Activated CD8-positive, alpha-beta T cell treated with anti-CD3 and anti-CD28 coated beads, Interleukin-2, amount 10 ng/mL, durations not matched to agents 7 days and 5 days (primary cell): ENCODE measurements at regions of chr1 and their contacts with region 1.

Region 1: GRCh38 chr1:206030714-206031113 is 7.0 kb upstream of the CTSE start:
- DNase-seq: peak; percentile 79
- ATAC-seq: peak; percentile 98
- H3K4me3 Mint-ChIP-seq: no peak overlapping the region
- H3K27ac Mint-ChIP-seq: no peak overlapping the region
- H3K4me1 Mint-ChIP-seq: peaks cover 7% of the 10 kb centered on the region
- H3K27me3 Mint-ChIP-seq: peaks cover 39% of the 10 kb centered on the region

Region 2: GRCh38 chr1:205983925-205984725 is 46.6 kb before region 1 on chr1:
- CTCF ChIA-PET with region 1: interaction called, 21 read pairs
- POLR2A ChIA-PET with region 1: no interaction called
- DNase-seq: peak; percentile 46
- ATAC-seq: peak; percentile 63
- H3K4me3 Mint-ChIP-seq: no peak overlapping the region
- H3K27ac Mint-ChIP-seq: no peak overlapping the region
- H3K4me1 Mint-ChIP-seq: no peaks in the 10 kb centered on the region
- H3K27me3 Mint-ChIP-seq: peaks cover 5% of the 10 kb centered on the region

Region 3: GRCh38 chr1:206041640-206042039 is 10.9 kb after region 1 on chr1:
- CTCF ChIA-PET with region 1: interaction called, 29 read pairs
- POLR2A ChIA-PET with region 1: no interaction called
- DNase-seq: no peak
- ATAC-seq: no peak
- H3K4me3 Mint-ChIP-seq: no peak overlapping the region
- H3K27ac Mint-ChIP-seq: no peak overlapping the region
- H3K4me1 Mint-ChIP-seq: peaks cover 7% of the 10 kb centered on the region
- H3K27me3 Mint-ChIP-seq: peaks cover 29% of the 10 kb centered on the region

Region 4: DNA sequence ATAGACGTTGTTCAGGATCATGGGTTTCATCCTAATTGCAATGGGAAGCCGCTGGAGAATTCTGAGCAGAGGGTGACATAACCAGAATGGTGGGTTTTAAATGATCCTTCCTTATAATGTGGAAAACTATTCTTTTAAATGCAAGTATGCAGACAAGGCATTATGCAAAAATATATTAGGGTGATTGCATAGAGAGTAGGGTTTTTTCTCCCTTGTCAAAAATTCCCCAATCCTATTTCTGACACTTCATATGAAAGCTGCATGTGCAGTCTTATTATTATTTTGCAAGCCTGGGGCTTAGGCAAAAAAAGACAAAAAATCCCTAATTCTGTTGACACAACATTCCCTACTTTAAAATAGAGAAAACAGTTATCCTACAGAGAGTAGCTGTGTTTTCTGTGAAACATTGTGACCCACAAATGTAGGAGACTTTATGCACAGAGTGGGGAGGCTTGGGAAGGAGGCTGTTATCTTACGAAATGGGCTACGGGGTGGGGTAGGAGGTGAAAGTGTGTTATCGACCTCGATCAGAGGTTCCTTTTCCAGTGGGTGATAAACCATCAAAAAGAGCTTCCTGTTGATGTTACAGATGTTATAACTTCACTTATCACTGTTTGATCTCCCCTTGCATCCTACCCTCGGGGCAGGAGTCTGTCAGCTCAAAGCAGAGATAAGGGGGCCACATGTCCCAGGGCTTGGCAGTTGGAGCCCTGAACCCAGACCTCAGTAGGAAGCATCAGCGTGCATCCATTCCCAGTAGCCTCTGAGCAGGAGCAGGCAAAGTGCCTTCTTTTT is 49.5 kb after region 1 on chr1:
- CTCF ChIA-PET with region 1: interaction called, 18 read pairs
- POLR2A ChIA-PET with region 1: no interaction called
- DNase-seq: no peak
- ATAC-seq: peak; percentile 63
- H3K4me3 Mint-ChIP-seq: peak overlapping the region; percentile 2
- H3K27ac Mint-ChIP-seq: no peak overlapping the region
- H3K4me1 Mint-ChIP-seq: peaks cover 18% of the 10 kb centered on the region
- H3K27me3 Mint-ChIP-seq: peaks cover 31% of the 10 kb centered on the region

Region 5: GRCh38 chr1:206106328-206107167 is 75.8 kb after region 1 on chr1:
- CTCF ChIA-PET with region 1: interaction called, 252 read pairs
- POLR2A ChIA-PET with region 1: interaction called, 5 read pairs
- DNase-seq: peak; percentile 83
- ATAC-seq: peak; percentile 89
- H3K4me3 Mint-ChIP-seq: no peak overlapping the region
- H3K27ac Mint-ChIP-seq: no peak overlapping the region
- H3K4me1 Mint-ChIP-seq: no peaks in the 10 kb centered on the region
- H3K27me3 Mint-ChIP-seq: peaks cover 9% of the 10 kb centered on the region